ENCODE measurements at regions of chr19 and their contacts with region 1.

Region 1: DNA sequence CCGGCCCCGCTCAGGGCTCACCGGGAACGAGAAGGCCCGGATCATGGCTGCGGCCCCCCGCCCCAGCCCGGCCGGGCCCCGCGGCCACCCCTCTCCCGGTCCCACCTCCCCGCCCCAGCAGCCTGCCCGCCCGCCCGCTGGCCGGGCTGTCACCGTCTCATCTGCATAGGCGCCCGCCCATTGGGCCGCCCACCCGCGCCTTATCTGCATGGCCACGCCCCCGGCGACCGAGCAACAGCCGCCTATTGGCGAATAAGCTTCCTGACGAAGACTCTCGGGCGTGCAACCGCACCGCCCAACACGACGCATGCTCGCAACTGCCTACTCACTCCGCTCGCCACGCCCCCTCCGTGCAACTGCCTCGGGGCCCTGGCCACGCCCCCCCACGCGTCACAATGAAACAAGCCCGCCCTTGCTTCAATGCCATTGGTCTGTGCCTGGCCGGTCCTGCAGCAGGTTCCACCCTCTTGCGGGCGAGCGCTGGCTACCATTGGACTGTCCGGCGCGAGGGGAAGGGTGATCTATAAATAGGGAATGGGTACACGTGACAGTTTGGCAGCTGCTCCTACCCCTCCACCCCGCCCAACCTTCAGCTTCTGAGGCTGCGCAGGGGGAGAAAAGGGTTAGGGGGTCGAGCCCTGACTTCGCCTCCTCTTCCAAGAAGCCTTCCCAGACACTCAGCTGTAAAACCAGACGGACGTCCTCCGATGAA is at the start of gene DACT3:
- DNase-seq: peak; percentile 99
- ATAC-seq: peak; percentile 97
- H3K4me3 ChIP-seq: peak within 1 kb of the TSS; percentile 59
- H3K27ac ChIP-seq: no peak within 1 kb of the TSS; the same call in 1 of the 2 replicates
- H3K4me1 ChIP-seq: peaks cover 22% of the 10 kb centered on the region
- H3K27me3 ChIP-seq: peaks cover 3% of the 10 kb centered on the region in 2 experiments; a peak in 3 of 4 replicates
- CTCF ChIP-seq: no peak
- EP300 ChIP-seq: no peak
- POLR2A ChIP-seq: no peak
- RAD21 ChIP-seq: no peak
- polyA plus RNA-seq, gene DACT3: 0.11 to 0.16 TPM

Region 2: DNA sequence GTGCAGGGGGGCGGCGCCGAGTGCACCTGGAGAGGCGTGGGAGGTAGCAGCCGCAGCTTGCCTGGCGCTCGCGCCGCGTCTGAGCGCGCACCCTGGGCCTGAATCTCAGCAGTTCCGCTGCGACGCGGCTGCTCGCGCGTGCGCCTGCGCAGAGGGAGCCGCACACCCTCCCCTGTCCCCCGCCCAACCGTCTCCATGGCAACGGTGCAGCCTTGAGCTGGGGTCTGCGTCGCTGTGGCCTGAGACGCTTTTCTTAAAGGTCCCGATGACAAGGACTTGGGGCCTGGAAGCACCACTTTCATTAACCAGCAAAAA is 165.4 kb before region 1 on chr19 and contains the start of gene PNMA8B:
- CTCF ChIA-PET with region 1: no interaction called
- POLR2A ChIA-PET with region 1: no interaction called
- RAD21 ChIA-PET with region 1: no interaction called
- SMC1A ChIA-PET with region 1: no interaction called
- in situ Hi-C with region 1: no loop called
- intact Hi-C with region 1: no loop called
- DNase-seq: no peak
- ATAC-seq: no peak; the same call in 2 of the 3 replicates
- H3K4me3 ChIP-seq: no peak within 1 kb of the TSS
- H3K27ac ChIP-seq: no peak within 1 kb of the TSS
- H3K4me1 ChIP-seq: no peaks in the 10 kb centered on the region
- H3K27me3 ChIP-seq: peaks cover 13 to 23% of the 10 kb centered on the region in 2 experiments
- CTCF ChIP-seq: no peak
- EP300 ChIP-seq: no peak
- POLR2A ChIP-seq: no peak
- RAD21 ChIP-seq: no peak
- polyA plus RNA-seq, gene PNMA8B: not detected

Region 3: GRCh38 chr19:46542428-46543230 is 118.5 kb before region 1 on chr19:
- CTCF ChIA-PET with region 1: interaction called, 18 read pairs
- POLR2A ChIA-PET with region 1: no interaction called
- RAD21 ChIA-PET with region 1: interaction called, 3 read pairs
- SMC1A ChIA-PET with region 1: interaction called, 4 read pairs
- in situ Hi-C with region 1: no loop called
- intact Hi-C with region 1: no loop called
- DNase-seq: no peak
- ATAC-seq: peak; percentile 81
- H3K4me3 ChIP-seq: no peak overlapping the region
- H3K27ac ChIP-seq: no peak overlapping the region
- H3K4me1 ChIP-seq: no peaks in the 10 kb centered on the region
- H3K27me3 ChIP-seq: no peaks in the 10 kb centered on the region; a peak in 2 of 4 replicates
- CTCF ChIP-seq: peak; percentile 75 to 77 (median 77)
- EP300 ChIP-seq: no peak
- POLR2A ChIP-seq: no peak
- RAD21 ChIP-seq: peak; percentile 64

Region 4: DNA sequence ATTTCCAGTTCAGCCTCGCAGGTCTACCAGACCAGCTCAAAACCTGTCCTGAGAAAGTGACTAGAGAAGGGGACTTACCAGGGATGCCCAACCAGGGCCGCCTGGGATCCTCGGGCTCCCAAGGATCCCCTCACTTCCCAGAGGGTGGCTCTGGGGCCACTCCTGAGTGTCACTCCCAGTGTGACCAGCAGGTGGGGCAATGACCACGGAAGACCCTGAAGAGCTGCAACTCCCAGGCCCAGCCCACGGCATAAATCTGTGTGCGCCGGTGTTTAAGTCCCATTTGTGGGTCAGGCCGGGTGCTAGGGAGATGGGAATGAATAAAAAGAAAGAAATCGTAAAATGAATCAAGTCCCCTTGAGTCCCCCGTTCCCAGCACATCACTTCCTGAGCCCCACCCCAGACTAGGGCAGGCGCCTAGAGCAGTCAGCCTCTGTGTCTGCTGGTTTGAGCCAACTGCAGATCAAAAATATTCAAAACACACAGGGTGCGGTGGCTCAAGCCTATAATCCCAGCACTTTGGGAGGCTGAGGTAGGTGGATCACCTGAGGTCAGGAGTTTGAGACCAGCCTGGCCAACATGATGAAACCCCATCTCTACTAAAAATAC is 47.0 kb before region 1 on chr19:
- CTCF ChIA-PET with region 1: interaction called, 434 read pairs
- POLR2A ChIA-PET with region 1: interaction called, 30 read pairs
- RAD21 ChIA-PET with region 1: interaction called, 245 read pairs
- SMC1A ChIA-PET with region 1: interaction called, 286 read pairs
- in situ Hi-C with region 1: loop called (anchors 5 kb)
- intact Hi-C with region 1: loop called (anchors 1 kb)
- DNase-seq: no peak
- ATAC-seq: peak; percentile 66
- H3K4me3 ChIP-seq: no peak overlapping the region
- H3K27ac ChIP-seq: no peak overlapping the region
- H3K4me1 ChIP-seq: peaks cover 47% of the 10 kb centered on the region
- H3K27me3 ChIP-seq: no peaks in the 10 kb centered on the region
- CTCF ChIP-seq: peak; percentile 88 to 92 (median 89)
- EP300 ChIP-seq: no peak
- POLR2A ChIP-seq: no peak
- RAD21 ChIP-seq: peak; percentile 94

Region 5: DNA sequence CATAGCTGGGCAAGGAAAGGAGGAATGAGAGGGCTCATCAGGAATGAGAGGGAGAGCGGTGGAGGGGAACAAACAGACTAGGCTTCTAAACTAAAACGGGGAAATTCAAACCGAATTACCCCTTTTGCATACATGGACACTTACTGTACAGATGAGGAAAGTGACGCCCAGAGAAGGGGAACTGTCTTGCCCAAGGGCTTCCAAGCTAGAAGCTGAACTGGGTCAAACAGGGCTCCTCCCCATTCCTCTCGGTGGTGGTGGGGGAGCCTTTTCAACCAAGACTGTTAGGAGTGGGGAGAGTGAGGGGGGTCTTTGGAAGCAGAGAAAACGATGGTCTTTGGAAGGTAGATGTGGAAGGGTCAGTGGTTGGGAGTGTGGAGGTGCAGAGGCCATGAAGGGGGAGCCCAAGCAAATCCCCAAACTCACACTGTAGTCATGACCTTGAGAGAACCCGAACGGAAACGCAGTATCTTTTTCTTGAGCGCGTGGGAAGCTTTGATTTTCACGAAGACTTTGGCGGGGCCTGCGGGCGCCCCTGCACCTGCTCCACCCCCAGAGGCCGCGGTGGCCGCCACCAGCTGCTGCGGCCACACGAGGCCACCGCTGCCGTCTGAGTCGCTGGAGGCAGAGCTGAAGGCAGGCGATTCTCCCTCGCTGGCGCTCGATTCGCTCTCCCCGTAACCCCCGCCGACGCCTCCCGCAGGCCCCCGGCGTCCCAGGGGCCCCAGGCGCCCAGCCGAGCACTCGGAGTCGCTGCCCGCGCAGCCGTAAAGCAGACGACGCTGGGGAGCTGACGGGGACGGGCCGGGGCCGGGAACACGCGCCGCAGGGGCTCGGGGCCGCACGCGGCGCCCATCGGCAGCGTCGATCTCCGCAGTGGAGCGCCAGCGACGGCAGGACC is 12.9 kb before region 1 on chr19:
- CTCF ChIA-PET with region 1: interaction called, 14 read pairs
- POLR2A ChIA-PET with region 1: interaction called, 5 read pairs
- RAD21 ChIA-PET with region 1: interaction called, 22 read pairs
- SMC1A ChIA-PET with region 1: interaction called, 22 read pairs
- in situ Hi-C with region 1: no loop called
- intact Hi-C with region 1: no loop called
- DNase-seq: no peak
- ATAC-seq: peak; percentile 70
- H3K4me3 ChIP-seq: no peak overlapping the region
- H3K27ac ChIP-seq: no peak overlapping the region
- H3K4me1 ChIP-seq: peaks cover 5% of the 10 kb centered on the region; the same call in 1 of the 2 replicates
- H3K27me3 ChIP-seq: no peaks in the 10 kb centered on the region; a peak in 1 of 4 replicates
- CTCF ChIP-seq: no peak
- EP300 ChIP-seq: 0 out of 4 replicates have a peak, but pooled peaks of 1 of the 2 experiments have one; percentile 15
- POLR2A ChIP-seq: no peak
- RAD21 ChIP-seq: no peak

Region 6: GRCh38 chr19:46717034-46717723 is 56.0 kb after region 1 on chr19 and contains the start of gene PRKD2:
- CTCF ChIA-PET with region 1: interaction called, 5 read pairs
- POLR2A ChIA-PET with region 1: interaction called, 5 read pairs
- RAD21 ChIA-PET with region 1: interaction called, 14 read pairs
- SMC1A ChIA-PET with region 1: no interaction called
- in situ Hi-C with region 1: no loop called
- intact Hi-C with region 1: no loop called
- DNase-seq: no peak
- ATAC-seq: peak; percentile 67
- H3K4me3 ChIP-seq: peak within 1 kb of the TSS; percentile 91
- H3K27ac ChIP-seq: peak within 1 kb of the TSS; percentile 88
- H3K4me1 ChIP-seq: peaks cover 30% of the 10 kb centered on the region
- H3K27me3 ChIP-seq: no peaks in the 10 kb centered on the region
- CTCF ChIP-seq: no peak
- EP300 ChIP-seq: no peak
- POLR2A ChIP-seq: peak; percentile 72
- RAD21 ChIP-seq: no peak
- polyA plus RNA-seq, gene PRKD2: 2.3 to 11.8 TPM